Aorta (tissue), 5 donors: ENCODE measurements at regions of chr5 and their contacts with region 1.

Region 1: DNA sequence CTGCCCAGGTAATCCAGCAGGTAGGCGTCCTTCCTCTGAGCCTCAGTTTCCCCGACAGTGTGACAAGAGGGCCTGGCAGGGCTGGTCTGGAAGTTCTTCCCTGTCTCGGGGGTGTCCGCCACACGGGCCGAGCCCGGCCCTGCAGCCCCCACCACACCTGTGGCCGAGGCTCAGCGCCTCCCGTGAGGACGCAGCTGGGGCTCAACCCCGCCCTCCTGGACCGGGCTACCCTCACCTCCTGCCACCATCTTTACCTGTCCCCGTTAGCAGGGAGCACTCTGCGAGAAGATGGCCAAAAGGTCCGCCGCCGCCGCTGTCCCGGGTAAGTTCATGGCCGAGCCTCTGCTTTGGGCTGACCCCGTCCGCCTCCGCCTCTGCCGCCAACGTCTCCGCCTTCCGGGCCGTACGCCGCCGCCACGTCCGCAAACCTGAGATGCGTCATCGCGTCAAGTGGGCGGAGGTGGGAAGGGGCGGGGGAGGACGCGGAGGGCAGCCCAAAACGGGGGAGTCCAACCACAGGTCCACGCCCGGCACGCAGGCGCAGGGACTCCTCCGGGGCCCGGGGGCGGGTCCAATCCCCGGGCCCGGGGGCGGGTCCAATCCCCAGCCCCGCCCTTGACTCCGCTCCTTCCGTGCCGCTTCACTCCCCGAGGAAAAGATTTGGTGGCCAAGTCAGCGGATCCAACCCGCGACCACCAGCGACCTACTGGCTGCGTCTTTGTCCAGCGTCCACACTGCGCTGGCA is at the start of gene LYSMD3:
- DNase-seq: peak; percentile 99
- ATAC-seq: peak; percentile 100
- H3K4me3 ChIP-seq: peak within 1 kb of the TSS; percentile 62 to 88
- H3K27ac ChIP-seq: peak within 1 kb of the TSS; percentile 48 to 52
- H3K4me1 ChIP-seq: no peaks in the 10 kb centered on the region
- H3K27me3 ChIP-seq: no peaks in the 10 kb centered on the region
- total RNA-seq, gene LYSMD3: 24.7 to 29.7 TPM

Region 2: GRCh38 chr5:90326995-90327394 is 202.4 kb before region 1 on chr5:
- intact Hi-C with region 1: no loop called
- DNase-seq: no peak
- ATAC-seq: no peak
- H3K4me3 ChIP-seq: no peak overlapping the region
- H3K27ac ChIP-seq: no peak overlapping the region
- H3K4me1 ChIP-seq: no peaks in the 10 kb centered on the region
- H3K27me3 ChIP-seq: no peaks in the 10 kb centered on the region

Region 3: GRCh38 chr5:90368454-90369246 is 160.7 kb before region 1 on chr5:
- intact Hi-C with region 1: no loop called
- DNase-seq: no peak
- ATAC-seq: no peak
- H3K4me3 ChIP-seq: no peak overlapping the region
- H3K27ac ChIP-seq: no peak overlapping the region
- H3K4me1 ChIP-seq: no peaks in the 10 kb centered on the region
- H3K27me3 ChIP-seq: no peaks in the 10 kb centered on the region

Region 4: GRCh38 chr5:90438100-90438499 is 91.3 kb before region 1 on chr5:
- intact Hi-C with region 1: loop called (anchors 5 kb)
- DNase-seq: no peak
- ATAC-seq: no peak
- H3K4me3 ChIP-seq: no peak overlapping the region
- H3K27ac ChIP-seq: no peak overlapping the region
- H3K4me1 ChIP-seq: no peaks in the 10 kb centered on the region
- H3K27me3 ChIP-seq: no peaks in the 10 kb centered on the region

Region 5: GRCh38 chr5:90474235-90475109 is 54.9 kb before region 1 on chr5 and contains the starts of genes MBLAC2 and POLR3G:
- intact Hi-C with region 1: loop called (anchors 1 to 5 kb)
- DNase-seq: peak; percentile 95 to 96
- ATAC-seq: peak; percentile 98
- H3K4me3 ChIP-seq: peak within 1 kb of the TSS; percentile 50 to 63
- H3K27ac ChIP-seq: peak within 1 kb of the TSS in 1 of 2 donors; percentile 7
- H3K4me1 ChIP-seq: peaks cover 0 to 5% of the 10 kb centered on the region in 2 donors
- H3K27me3 ChIP-seq: no peaks in the 10 kb centered on the region
- total RNA-seq, gene MBLAC2: 3.0 to 5.8 TPM
- total RNA-seq, gene POLR3G: 1.0 to 1.5 TPM